SK-N-SH (cell line): ENCODE measurements at regions of chr15 and their contacts with region 1.

Region 1: GRCh38 chr15:96585484-96586386 is 255.2 kb downstream of the NR2F2 start:
- DNase-seq: peak; percentile 40
- H3K4me3 ChIP-seq: no peak overlapping the region
- H3K27ac ChIP-seq: no peak overlapping the region
- H3K4me1 ChIP-seq: no peaks in the 10 kb centered on the region; a peak in 1 of 4 replicates
- H3K27me3 ChIP-seq: no peaks in the 10 kb centered on the region
- CTCF ChIP-seq: no peak
- EP300 ChIP-seq: no peak
- RAD21 ChIP-seq: peak; percentile 64

Region 2: GRCh38 chr15:96356494-96357455 is 229.0 kb before region 1 on chr15:
- CTCF ChIA-PET with region 1: interaction called, 102 read pairs
- POLR2A ChIA-PET with region 1: no interaction called
- DNase-seq: peak; percentile 86
- H3K4me3 ChIP-seq: peak overlapping the region; percentile 54 to 82
- H3K27ac ChIP-seq: no peak overlapping the region
- H3K4me1 ChIP-seq: peaks cover 0 to 4% of the 10 kb centered on the region in 2 experiments; a peak in 1 of 4 replicates
- H3K27me3 ChIP-seq: peaks cover 90% of the 10 kb centered on the region
- CTCF ChIP-seq: peak; percentile 92
- EP300 ChIP-seq: no peak
- RAD21 ChIP-seq: peak; percentile 67

Region 3: GRCh38 chr15:96514607-96515285 is 71.0 kb before region 1 on chr15:
- CTCF ChIA-PET with region 1: no interaction called
- POLR2A ChIA-PET with region 1: no interaction called
- DNase-seq: no peak
- H3K4me3 ChIP-seq: no peak overlapping the region
- H3K27ac ChIP-seq: no peak overlapping the region
- H3K4me1 ChIP-seq: no peaks in the 10 kb centered on the region
- H3K27me3 ChIP-seq: no peaks in the 10 kb centered on the region
- CTCF ChIP-seq: no peak
- EP300 ChIP-seq: no peak
- RAD21 ChIP-seq: no peak